MCF 10A (cell line): ENCODE measurements at regions of chr10 and their contacts with region 1.

Region 1: DNA sequence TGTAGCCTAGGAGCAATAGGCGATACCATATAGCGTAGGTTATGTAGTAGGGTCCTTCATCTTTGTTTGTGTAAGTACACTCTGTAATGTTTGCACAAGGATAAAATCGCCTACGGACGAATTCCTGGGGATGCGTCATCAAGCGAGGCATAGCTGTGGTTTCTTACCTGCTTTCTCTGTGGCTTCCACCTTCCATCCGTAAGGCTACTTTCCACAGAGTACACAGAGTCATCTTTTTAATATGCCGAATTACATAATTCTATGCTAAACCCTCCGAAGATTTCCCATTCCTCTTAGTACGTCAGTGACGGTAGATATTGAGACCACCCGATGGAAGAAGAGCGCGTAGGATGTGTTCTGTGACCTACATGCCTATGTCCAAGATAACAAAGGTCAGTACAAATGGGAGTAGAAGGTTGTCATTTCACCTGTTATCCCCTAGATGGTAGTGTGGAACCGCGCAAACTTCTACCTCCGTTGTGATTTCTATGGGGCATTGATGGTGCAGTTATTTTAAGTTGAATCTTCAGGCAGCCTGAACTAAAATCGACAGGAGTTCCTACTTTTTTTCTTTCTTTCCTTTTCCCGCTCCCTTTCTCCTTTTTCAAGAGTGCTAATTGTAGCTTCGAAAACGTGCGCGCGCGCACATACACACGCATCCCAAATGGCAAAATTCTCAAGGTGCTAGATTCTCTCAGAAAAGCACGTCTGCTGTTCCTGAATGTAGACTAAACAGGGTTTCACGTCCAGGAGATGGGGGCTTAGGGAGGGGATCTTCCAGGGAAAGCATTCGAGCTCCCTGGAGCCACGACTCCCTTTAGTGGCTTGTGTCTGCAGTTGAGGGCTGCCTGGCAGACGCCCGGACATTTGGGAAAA is 111.7 kb upstream of the MBL2 start:
- DNase-seq: peak; percentile 98
- H3K4me3 Mint-ChIP-seq: peak overlapping the region; percentile 65
- H3K27ac Mint-ChIP-seq: peak overlapping the region; percentile 85
- H3K4me1 Mint-ChIP-seq: peaks cover 30% of the 10 kb centered on the region
- H3K27me3 Mint-ChIP-seq: no peaks in the 10 kb centered on the region
- CTCF ChIP-seq: peak; percentile 93

Region 2: GRCh38 chr10:52895059-52895458 is 10.8 kb after region 1 on chr10:
- CTCF ChIA-PET with region 1: interaction called, 26 read pairs
- POLR2A ChIA-PET with region 1: no interaction called
- intact Hi-C with region 1: no loop called
- DNase-seq: peak; percentile 24
- H3K4me3 Mint-ChIP-seq: no peak overlapping the region
- H3K27ac Mint-ChIP-seq: no peak overlapping the region
- H3K4me1 Mint-ChIP-seq: peaks cover 17% of the 10 kb centered on the region
- H3K27me3 Mint-ChIP-seq: no peaks in the 10 kb centered on the region
- CTCF ChIP-seq: no peak

Region 3: GRCh38 chr10:53314876-53315275 is 430.6 kb after region 1 on chr10:
- CTCF ChIA-PET with region 1: interaction called, 4 read pairs
- POLR2A ChIA-PET with region 1: interaction called, 3 read pairs
- intact Hi-C with region 1: loop called (anchors 1 kb)
- DNase-seq: peak; percentile 86
- H3K4me3 Mint-ChIP-seq: no peak overlapping the region
- H3K27ac Mint-ChIP-seq: peak overlapping the region; percentile 16
- H3K4me1 Mint-ChIP-seq: peaks cover 6% of the 10 kb centered on the region
- H3K27me3 Mint-ChIP-seq: no peaks in the 10 kb centered on the region
- CTCF ChIP-seq: no peak

Region 4: DNA sequence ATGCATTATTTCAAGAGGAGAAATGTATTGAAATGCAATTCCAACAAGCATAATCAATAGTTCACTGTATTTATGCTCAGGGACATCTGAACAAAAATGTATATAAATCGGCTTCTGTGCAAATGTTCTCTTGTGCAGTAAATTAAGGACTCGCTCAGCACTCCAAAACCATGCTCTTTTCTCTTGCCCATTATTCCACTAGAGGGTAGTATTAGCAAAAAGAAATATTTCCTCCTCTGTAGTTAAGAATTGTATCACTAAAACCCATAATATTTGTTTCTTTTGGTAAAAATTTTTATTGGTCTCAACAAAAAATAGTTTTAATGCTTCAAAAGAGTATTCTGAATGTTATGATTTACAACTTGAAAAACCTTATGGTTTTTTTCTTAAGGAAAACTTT is 1113.7 kb after region 1 on chr10:
- CTCF ChIA-PET with region 1: interaction called, 3 read pairs
- POLR2A ChIA-PET with region 1: no interaction called
- intact Hi-C with region 1: loop called (anchors 5 kb)
- DNase-seq: peak; percentile 26
- H3K4me3 Mint-ChIP-seq: no peak overlapping the region
- H3K27ac Mint-ChIP-seq: no peak overlapping the region
- H3K4me1 Mint-ChIP-seq: no peaks in the 10 kb centered on the region
- H3K27me3 Mint-ChIP-seq: no peaks in the 10 kb centered on the region
- CTCF ChIP-seq: peak; percentile 41